ENCODE measurements at regions of chr10 and their contacts with region 1.

Region 1: GRCh38 chr10:79948976-79949722 is at the start of gene SFTPD:
- DNase-seq: no peak
- ATAC-seq: no peak
- H3K4me3 ChIP-seq: no peak within 1 kb of the TSS
- H3K4me3 Mint-ChIP-seq: no peak within 1 kb of the TSS
- H3K27ac ChIP-seq: no peak within 1 kb of the TSS
- H3K27ac Mint-ChIP-seq: no peak within 1 kb of the TSS
- H3K4me1 ChIP-seq: no peaks in the 10 kb centered on the region
- H3K4me1 Mint-ChIP-seq: no peaks in the 10 kb centered on the region
- H3K27me3 ChIP-seq: no peaks in the 10 kb centered on the region
- H3K27me3 Mint-ChIP-seq: peaks cover 6% of the 10 kb centered on the region
- CTCF ChIP-seq: no peak
- total RNA-seq, gene SFTPD: not detected

Region 2: GRCh38 chr10:79970062-79970461 is 20.9 kb after region 1 on chr10:
- CTCF ChIA-PET with region 1: no interaction called
- POLR2A ChIA-PET with region 1: no interaction called
- intact Hi-C with region 1: loop called in 1 of 2 experiments (anchors 1 kb)
- DNase-seq: no peak
- ATAC-seq: no peak
- H3K4me3 ChIP-seq: no peak overlapping the region
- H3K4me3 Mint-ChIP-seq: no peak overlapping the region
- H3K27ac ChIP-seq: no peak overlapping the region
- H3K27ac Mint-ChIP-seq: no peak overlapping the region
- H3K4me1 ChIP-seq: no peaks in the 10 kb centered on the region
- H3K4me1 Mint-ChIP-seq: no peaks in the 10 kb centered on the region
- H3K27me3 ChIP-seq: no peaks in the 10 kb centered on the region
- H3K27me3 Mint-ChIP-seq: peaks cover 24% of the 10 kb centered on the region
- CTCF ChIP-seq: no peak